Activated B cell treated with CpG ODN at 0.5 μM for 24 hours (primary cell): ENCODE measurements at regions of chr10 and their contacts with region 1.

Region 1: GRCh38 chr10:6083523-6084475 is 5.0 kb upstream of the RBM17 start:
- DNase-seq: no peak
- ATAC-seq: no peak
- H3K4me3 Mint-ChIP-seq: no peak overlapping the region
- H3K27ac Mint-ChIP-seq: no peak overlapping the region
- H3K4me1 Mint-ChIP-seq: peaks cover 39% of the 10 kb centered on the region
- H3K27me3 Mint-ChIP-seq: no peaks in the 10 kb centered on the region
- CTCF ChIP-seq: no peak

Region 2: DNA sequence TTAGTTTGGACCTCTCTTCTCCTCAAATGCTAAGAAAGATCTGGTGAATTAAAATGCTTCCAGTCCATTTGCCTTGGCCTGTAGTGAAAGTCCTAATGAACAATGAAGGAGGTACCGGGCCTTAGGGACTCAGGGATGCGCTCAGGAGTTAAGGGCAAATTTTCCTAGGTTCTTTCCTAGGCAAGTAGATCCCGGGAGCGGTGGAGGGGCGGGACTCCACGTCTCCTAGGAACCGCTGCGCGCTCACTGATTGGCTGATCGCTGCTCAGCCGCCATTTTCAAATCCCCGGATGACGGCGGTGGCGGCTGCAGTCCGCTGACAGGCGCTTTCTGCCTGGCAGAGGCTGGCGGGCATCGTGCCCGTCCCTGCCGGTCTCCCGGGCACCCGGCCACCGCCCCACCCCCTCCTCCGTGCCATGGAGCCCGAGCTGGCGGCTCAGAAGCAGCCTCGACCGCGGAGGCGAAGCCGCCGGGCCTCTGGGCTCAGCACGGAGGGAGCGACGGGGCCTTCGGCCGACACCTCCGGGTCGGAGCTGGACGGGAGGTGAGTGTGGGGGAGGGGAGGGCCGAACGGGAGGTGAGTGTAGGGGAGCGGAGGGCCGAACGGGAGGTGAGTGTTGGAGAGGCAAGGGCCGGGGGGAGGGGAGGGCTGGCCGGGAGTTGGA is 671.4 kb before region 1 on chr10 and contains the start of gene NET1:
- CTCF ChIA-PET with region 1: no interaction called
- POLR2A ChIA-PET with region 1: no interaction called
- intact Hi-C with region 1: no loop called
- DNase-seq: peak; percentile 60
- ATAC-seq: peak; percentile 85
- H3K4me3 Mint-ChIP-seq: peak within 1 kb of the TSS; percentile 84
- H3K27ac Mint-ChIP-seq: no peak within 1 kb of the TSS
- H3K4me1 Mint-ChIP-seq: peaks cover 3% of the 10 kb centered on the region
- H3K27me3 Mint-ChIP-seq: peaks cover 12% of the 10 kb centered on the region
- CTCF ChIP-seq: no peak
- total RNA-seq, gene NET1: 19.0 and 22.5 TPM in 2 replicates

Region 3: DNA sequence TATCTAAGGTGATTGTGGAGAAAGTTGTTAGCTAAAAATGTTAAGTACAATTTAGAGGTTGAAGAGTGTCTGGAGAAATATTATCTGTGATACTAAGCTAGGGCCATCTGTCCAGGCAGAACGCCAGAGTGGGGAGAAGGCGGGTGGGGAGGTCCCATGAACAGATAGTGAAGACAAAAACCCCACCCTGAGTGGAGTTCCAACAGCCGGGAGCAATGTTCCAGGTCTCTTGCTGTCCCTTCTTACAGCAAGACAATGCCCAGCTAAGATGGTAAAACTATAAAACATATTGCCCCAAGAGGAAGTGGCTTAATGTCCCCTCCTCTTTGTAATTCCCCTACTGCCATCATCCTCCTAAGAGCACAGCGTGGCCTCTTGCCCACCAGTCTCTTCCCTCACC is 96.1 kb before region 1 on chr10:
- CTCF ChIA-PET with region 1: no interaction called
- POLR2A ChIA-PET with region 1: no interaction called
- intact Hi-C with region 1: no loop called
- DNase-seq: no peak
- ATAC-seq: peak; percentile 90
- H3K4me3 Mint-ChIP-seq: peak overlapping the region; percentile 6
- H3K27ac Mint-ChIP-seq: peak overlapping the region; percentile 62
- H3K4me1 Mint-ChIP-seq: peaks cover 10% of the 10 kb centered on the region
- H3K27me3 Mint-ChIP-seq: no peaks in the 10 kb centered on the region
- CTCF ChIP-seq: no peak

Region 4: DNA sequence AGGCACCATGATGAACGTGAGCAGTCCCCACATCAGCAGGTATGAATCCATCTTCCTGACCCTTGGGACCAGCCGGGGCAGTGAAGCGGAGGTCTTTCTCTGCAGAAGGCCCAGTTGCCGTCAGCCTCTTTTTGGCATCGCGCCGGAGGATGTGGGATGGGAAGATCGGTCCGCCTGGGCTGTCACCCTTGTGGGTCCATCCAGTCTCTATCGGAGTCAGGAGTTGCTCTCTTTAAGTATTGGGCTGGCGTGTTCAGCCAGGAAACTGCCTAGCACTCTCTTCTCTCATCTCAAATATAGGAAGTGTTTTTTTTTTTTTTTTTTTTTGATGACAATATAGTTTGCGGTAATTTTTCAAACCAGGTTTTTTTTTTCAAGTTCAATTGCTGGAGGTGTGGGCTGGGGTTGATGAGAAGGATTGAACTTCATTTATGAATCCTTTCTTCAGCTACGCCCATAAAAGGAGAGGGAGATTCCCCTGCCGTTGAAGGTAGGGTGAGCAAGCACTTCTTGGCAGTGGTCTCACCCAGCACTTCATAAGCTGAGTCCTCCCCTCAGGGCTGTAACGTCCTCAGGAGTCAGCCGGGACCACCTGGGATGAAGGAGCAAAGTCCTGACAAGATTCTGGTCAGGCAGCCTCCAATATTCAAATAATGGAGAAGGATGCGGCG is 21.6 kb before region 1 on chr10 and contains the start of gene IL2RA:
- CTCF ChIA-PET with region 1: interaction called, 79 read pairs
- POLR2A ChIA-PET with region 1: interaction called, 28 read pairs
- intact Hi-C with region 1: loop called (anchors 1 kb)
- DNase-seq: peak; percentile 52
- ATAC-seq: peak; percentile 70
- H3K4me3 Mint-ChIP-seq: peak within 1 kb of the TSS; percentile 97
- H3K27ac Mint-ChIP-seq: peak within 1 kb of the TSS; percentile 93
- H3K4me1 Mint-ChIP-seq: peaks cover 75% of the 10 kb centered on the region
- H3K27me3 Mint-ChIP-seq: no peaks in the 10 kb centered on the region
- CTCF ChIP-seq: no peak
- total RNA-seq, gene IL2RA: 151 and 160 TPM in 2 replicates

Region 5: DNA sequence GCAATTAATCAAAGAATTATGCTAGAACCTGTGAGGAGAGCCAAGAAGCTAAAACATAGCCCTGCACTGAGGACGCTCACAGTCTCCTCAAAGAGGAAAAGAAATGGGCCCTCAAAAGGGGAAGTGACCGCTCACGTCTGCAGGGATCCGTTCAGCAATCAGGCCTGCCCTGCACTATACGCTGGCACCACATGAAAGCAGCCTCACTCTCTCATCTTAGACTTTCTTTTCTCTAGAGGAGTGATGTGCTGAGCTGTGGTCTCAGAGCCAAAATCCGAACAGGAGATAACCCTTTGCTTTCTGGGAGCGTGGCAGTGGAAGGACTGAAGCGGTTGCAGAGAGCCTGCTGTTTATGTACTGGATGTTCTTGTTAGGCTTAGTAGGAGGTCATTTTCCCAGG is 15.4 kb before region 1 on chr10:
- CTCF ChIA-PET with region 1: interaction called, 79 read pairs
- POLR2A ChIA-PET with region 1: interaction called, 35 read pairs
- intact Hi-C with region 1: loop called (anchors 1 kb)
- DNase-seq: no peak
- ATAC-seq: peak; percentile 72
- H3K4me3 Mint-ChIP-seq: peak overlapping the region; percentile 72
- H3K27ac Mint-ChIP-seq: peak overlapping the region; percentile 97
- H3K4me1 Mint-ChIP-seq: peaks cover 93% of the 10 kb centered on the region
- H3K27me3 Mint-ChIP-seq: no peaks in the 10 kb centered on the region
- CTCF ChIP-seq: no peak

Region 6: DNA sequence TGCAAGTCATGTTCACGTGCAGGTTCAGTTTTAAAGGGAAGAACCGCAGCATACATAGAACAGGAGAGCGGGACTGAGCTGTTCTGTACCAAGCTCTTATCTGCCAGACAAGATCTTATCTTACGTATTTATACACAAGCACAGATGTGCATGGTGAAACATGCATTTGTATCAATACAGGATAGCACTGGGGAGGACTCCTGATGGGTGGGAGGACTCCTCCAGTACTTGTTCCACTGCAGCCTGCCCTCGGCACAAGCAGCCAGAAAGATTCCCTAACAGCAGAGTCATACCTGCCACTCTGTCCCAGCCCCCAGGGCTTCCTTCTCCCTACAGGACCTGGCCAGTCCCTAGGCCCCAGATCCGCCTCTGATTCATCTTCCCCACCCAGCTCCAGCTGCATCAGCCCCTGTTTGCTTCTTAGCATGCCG is 509.5 kb after region 1 on chr10:
- CTCF ChIA-PET with region 1: no interaction called
- POLR2A ChIA-PET with region 1: no interaction called
- intact Hi-C with region 1: no loop called
- DNase-seq: no peak
- ATAC-seq: no peak
- H3K4me3 Mint-ChIP-seq: no peak overlapping the region
- H3K27ac Mint-ChIP-seq: no peak overlapping the region
- H3K4me1 Mint-ChIP-seq: peaks cover 2% of the 10 kb centered on the region
- H3K27me3 Mint-ChIP-seq: peaks cover 8% of the 10 kb centered on the region
- CTCF ChIP-seq: no peak